Spleen (tissue), 13 donors: ENCODE measurements at regions of chr19 and their contacts with region 1.

Region 1: GRCh38 chr19:925526-926322 is at the start of gene ARID3A:
- DNase-seq: peak; percentile 94
- H3K4me3 ChIP-seq: peak within 1 kb of the TSS; percentile 43 to 90 (median 87)
- H3K27ac ChIP-seq: peak within 1 kb of the TSS; percentile 86 to 98 (median 95)
- H3K4me1 ChIP-seq: peaks cover 5 to 76% (median 46%) of the 10 kb centered on the region in 6 donors
- H3K27me3 ChIP-seq: peaks cover 0 to 8% (median 2%) of the 10 kb centered on the region in 7 donors
- CTCF ChIP-seq: peak in 2 of 11 experiments; percentile 13 to 20
- POLR2A ChIP-seq: peak in 1 of 3 donors; percentile 23
- total RNA-seq, gene ARID3A: 14.9 to 42.5 (median 22.6) TPM

Region 2: GRCh38 chr19:782185-782877 is 143.4 kb before region 1 on chr19:
- intact Hi-C with region 1: loop called (anchors 10 kb)
- DNase-seq: no peak
- H3K4me3 ChIP-seq: peak overlapping the region in 2 of 8 donors; percentile 3 to 21
- H3K27ac ChIP-seq: peak overlapping the region; percentile 13 to 68 (median 57)
- H3K4me1 ChIP-seq: peaks cover 0 to 36% (median 19%) of the 10 kb centered on the region in 6 donors
- H3K27me3 ChIP-seq: peaks cover 0 to 8% (median 0%) of the 10 kb centered on the region in 7 donors
- CTCF ChIP-seq: no peak
- POLR2A ChIP-seq: no peak

Region 3: GRCh38 chr19:850221-850978 is 75.3 kb before region 1 on chr19:
- intact Hi-C with region 1: no loop called
- DNase-seq: peak; percentile 81
- H3K4me3 ChIP-seq: peak overlapping the region in 1 of 8 donors; percentile 5
- H3K27ac ChIP-seq: peak overlapping the region in 7 of 8 donors; percentile 60 to 82 (median 79)
- H3K4me1 ChIP-seq: peaks cover 0 to 60% (median 30%) of the 10 kb centered on the region in 6 donors
- H3K27me3 ChIP-seq: peaks cover 0 to 97% (median 55%) of the 10 kb centered on the region in 7 donors
- CTCF ChIP-seq: no peak
- POLR2A ChIP-seq: no peak